ENCODE measurements at regions of chr1 and their contacts with region 1.

Region 1: DNA sequence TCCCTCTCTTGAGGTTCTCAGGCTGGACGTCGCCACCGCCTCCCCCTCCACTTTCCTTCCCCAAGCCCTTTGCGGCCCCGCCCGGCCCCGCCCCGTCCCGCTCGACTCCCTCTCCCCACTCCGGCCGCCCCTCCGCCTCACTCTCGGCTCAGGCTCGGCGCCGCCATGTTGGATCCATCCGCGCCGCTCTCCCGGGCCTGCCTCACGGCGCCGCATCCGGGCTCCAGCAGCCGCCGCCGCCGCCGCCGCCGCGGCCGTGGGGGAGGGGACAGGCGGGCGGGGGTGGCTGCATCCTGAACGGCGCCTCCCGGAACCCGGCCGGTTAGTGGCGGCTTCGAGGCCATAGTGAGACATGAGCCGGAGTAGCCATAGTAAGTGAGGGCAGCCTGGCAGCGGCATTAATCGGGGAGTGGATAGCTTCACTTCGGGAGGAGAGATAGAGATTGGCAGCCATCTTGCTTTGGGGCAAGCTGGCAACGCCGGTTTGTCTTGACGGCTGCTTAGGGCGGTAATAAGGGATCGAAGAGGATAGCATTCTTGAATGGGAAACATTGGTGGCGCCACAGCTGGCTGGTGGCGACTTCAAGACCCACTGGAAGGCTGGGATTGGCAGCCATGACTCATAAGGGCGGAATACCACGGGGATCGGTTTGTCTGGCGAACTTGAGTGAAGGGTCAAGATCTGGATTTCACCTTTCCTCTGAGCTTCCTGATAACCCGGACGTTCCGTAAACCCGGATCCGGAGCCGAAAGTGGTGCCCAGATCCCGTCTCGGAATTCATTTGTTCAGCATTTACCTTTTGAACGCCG is at the start of gene DEDD:
- DNase-seq: peak; percentile 95 to 98
- ATAC-seq: peak; percentile 94 to 96 (median 95)
- H3K4me3 ChIP-seq: peak within 1 kb of the TSS; percentile 71
- H3K27ac ChIP-seq: peak within 1 kb of the TSS; percentile 92
- H3K4me1 ChIP-seq: peaks cover 52% of the 10 kb centered on the region
- H3K27me3 ChIP-seq: no peaks in the 10 kb centered on the region
- CTCF ChIP-seq: no peak
- total RNA-seq, gene DEDD: 30.4 to 70.8 (median 51.5) TPM

Region 2: GRCh38 chr1:161045750-161046571 is 86.7 kb before region 1 on chr1 and contains the start of gene USF1:
- intact Hi-C with region 1: loop called in 1 of 2 experiments (anchors 5 kb)
- DNase-seq: peak; percentile 92 to 96
- ATAC-seq: peak; percentile 98 to 99 (median 98)
- H3K4me3 ChIP-seq: peak within 1 kb of the TSS; percentile 88
- H3K27ac ChIP-seq: peak within 1 kb of the TSS; percentile 91
- H3K4me1 ChIP-seq: peaks cover 16% of the 10 kb centered on the region
- H3K27me3 ChIP-seq: peaks cover 0 to 2% (median 0%) of the 10 kb centered on the region in 3 donors
- CTCF ChIP-seq: no peak
- total RNA-seq, gene USF1: 29.8 to 50.6 (median 37.3) TPM

Region 3: GRCh38 chr1:161153679-161154426 is 21.2 kb after region 1 on chr1 and contains the start of gene UFC1:
- intact Hi-C with region 1: loop called in 1 of 2 experiments (anchors 2 kb)
- DNase-seq: peak; percentile 72 to 89
- ATAC-seq: peak; percentile 88 to 98 (median 90)
- H3K4me3 ChIP-seq: peak within 1 kb of the TSS; percentile 83
- H3K27ac ChIP-seq: peak within 1 kb of the TSS; percentile 96
- H3K4me1 ChIP-seq: peaks cover 3% of the 10 kb centered on the region
- H3K27me3 ChIP-seq: no peaks in the 10 kb centered on the region
- CTCF ChIP-seq: no peak
- total RNA-seq, gene UFC1: 56.6 to 76.2 (median 63.9) TPM

Region 4: DNA sequence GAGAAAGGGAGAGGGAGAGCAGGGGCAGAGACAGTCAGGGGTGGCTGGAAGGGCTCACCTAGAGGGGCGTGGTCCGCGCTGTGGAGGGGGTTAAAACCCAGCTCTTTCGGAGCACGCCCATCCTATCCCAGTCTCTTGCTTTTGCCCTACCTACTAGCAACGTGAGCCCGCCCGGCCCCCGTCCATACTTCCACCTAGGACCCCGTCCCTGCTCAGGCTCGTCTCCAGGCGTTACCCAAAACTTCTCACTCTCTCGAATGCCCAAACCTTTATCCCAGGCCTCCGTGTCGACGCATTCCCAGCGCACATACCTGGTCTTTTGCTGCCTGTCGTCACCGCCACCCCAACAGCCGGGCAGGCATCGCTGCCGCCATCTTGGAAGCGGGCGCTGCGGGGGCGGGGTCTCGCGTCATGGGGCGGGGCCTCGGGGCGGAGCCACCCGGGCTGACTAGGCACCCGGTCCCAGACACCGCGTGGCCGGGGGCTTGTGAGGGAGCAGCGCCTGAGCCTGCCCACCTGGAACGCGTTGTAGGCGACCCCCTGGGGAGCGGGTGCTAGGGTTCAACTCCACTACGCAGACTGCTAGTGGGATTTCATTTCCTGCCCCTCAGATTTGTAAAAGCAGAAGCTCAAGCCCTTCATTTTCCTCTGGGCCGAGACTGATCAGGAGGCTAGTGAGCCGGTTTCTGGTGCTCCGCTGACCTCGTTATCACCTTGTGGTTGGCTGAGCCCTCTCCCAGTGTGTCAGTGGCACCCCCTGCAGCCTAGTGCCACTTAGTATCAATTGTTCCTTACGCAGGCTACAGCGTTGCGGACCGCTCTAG is 44.7 kb after region 1 on chr1 and contains the start of gene B4GALT3:
- intact Hi-C with region 1: loop called in 1 of 2 experiments (anchors 1 kb)
- DNase-seq: peak; percentile 91 to 95
- ATAC-seq: peak; percentile 97 to 99 (median 98)
- H3K4me3 ChIP-seq: peak within 1 kb of the TSS; percentile 77
- H3K27ac ChIP-seq: peak within 1 kb of the TSS; percentile 91
- H3K4me1 ChIP-seq: peaks cover 22% of the 10 kb centered on the region
- H3K27me3 ChIP-seq: no peaks in the 10 kb centered on the region
- CTCF ChIP-seq: peak; percentile 18
- total RNA-seq, gene B4GALT3: 16.3 to 32.8 (median 28.9) TPM

Region 5: DNA sequence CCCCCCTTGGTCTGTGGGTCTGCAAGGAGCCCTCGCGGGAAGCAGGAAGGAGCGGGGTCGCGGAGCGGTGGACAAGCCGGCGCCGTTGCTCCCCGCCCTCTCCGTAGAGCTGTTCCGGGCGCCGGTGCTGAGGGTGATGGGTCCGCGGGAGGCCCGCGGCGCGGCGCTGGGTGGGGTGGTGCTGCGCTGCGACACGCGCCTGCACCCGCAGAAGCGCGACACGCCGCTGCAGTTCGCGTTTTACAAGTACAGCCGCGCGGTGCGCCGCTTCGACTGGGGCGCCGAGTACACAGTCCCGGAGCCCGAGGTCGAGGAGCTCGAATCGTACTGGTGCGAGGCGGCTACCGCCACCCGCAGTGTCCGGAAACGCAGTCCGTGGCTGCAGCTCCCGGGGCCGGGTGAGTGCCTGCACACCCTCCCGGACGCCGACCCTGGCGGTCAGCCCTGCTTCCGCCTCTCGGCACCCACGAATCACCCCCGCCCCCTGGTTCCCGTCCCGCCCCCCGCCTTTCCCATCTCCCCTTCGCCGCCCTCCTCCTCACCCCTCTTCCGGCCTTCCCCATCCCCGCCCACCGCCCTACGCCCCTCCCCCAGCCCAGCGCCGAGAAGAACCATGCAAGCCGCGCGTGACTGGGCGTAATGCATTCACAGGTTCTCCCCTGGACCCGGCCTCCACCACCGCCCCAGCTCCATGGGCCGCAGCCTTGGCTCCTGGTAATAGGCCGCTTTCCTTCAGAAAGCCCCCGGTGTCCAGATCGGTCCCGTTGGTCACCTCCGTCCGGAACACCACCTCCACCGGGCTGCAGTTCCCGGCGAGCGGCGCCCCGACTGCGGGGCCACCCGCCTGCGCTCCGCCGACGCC is 594.2 kb after region 1 on chr1:
- intact Hi-C with region 1: no loop called
- DNase-seq: peak; percentile 87 to 90
- ATAC-seq: peak; percentile 71 to 84 (median 78)
- H3K4me3 ChIP-seq: peak overlapping the region; percentile 72
- H3K27ac ChIP-seq: peak overlapping the region; percentile 74
- H3K4me1 ChIP-seq: peaks cover 4% of the 10 kb centered on the region
- H3K27me3 ChIP-seq: peaks cover 2 to 59% (median 5%) of the 10 kb centered on the region in 3 donors
- CTCF ChIP-seq: no peak